IMR-90 (cell line): ENCODE measurements at regions of chr12 and their contacts with region 1.

Region 1: DNA sequence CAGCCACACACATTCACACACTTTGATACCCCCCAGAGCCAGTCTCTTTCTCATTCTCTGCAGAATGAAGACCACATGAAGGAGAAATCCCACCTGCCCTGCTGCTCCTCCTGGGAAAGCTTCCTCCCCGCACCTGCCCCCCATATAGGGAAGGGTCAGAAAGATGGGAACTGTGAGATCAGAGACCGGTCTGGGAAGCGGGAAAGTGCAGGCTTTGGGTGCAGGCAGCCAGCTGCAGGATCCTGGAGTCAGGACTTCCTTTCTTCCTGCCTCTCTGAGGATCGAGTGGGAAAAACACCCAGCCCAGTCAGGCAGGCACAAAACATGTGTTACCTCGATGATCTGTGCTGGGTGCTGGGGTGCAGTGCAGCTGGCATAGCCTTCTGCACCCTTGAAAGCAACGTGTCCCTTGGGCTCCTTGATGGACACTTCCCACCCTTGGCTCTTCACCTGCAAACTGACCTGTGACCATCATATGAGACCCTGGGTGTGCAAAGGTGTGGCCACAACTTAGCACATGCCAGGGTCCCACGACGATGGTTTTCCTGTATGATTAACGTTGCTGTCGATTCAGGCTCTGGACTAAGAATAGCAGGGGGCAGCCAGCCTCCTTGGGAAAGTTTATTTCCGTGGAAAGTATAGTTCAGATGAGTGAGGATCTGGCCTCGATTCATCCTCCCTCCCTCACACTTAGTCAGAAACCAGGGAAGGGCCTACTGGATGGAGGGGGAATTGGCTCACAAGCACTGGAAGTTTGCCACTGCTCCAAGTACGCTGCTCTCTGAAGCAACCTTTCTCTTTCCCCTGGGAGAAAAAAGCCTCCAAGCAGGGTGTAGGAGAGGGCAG is 105.4 kb upstream of the MED13L start:
- DNase-seq: peak; percentile 99
- ATAC-seq: peak; percentile 66
- H3K4me3 ChIP-seq: no peak overlapping the region
- H3K27ac ChIP-seq: peak overlapping the region; percentile 95
- H3K4me1 ChIP-seq: peaks cover 23% of the 10 kb centered on the region
- H3K27me3 ChIP-seq: no peaks in the 10 kb centered on the region
- CTCF ChIP-seq: peak; percentile 13; the same call in 1 of the 2 replicates
- POLR2A ChIP-seq: no peak
- RAD21 ChIP-seq: peak; percentile 42

Region 2: DNA sequence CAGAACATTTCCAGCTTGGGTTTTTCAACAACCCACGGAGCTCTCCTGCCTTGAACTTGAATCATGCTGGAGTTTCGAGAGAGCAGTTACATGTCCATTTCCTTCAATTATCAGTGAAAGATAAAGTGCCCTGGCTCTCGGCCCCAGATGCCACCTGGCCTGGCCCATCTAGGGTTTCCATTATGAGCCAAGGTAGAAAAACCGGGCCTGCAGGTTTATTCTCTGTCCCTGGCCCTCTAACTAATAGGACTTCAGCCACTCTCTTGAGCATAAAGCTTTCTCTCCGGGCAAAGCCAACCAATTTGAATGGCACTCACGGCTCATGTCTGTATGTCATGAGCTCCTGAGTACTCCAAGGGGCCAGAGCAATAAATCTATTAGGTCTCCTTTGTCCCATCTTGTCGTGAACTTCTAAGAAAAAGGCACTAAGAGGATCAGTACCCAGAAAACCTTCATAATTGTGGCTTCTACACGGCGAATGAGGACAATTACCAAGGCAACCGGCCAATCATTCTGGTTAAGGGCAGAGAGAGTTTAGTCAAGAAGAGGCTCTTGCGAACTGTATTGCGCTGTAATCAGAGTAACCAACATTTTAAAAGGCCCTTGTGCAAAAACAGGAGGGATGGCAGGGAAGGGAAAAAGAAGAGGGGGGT is 497.7 kb before region 1 on chr12:
- CTCF ChIA-PET with region 1: no interaction called
- POLR2A ChIA-PET with region 1: no interaction called
- dilution Hi-C with region 1: no loop called
- in situ Hi-C with region 1: no loop called
- intact Hi-C with region 1: no loop called
- DNase-seq: no peak
- ATAC-seq: no peak
- H3K4me3 ChIP-seq: no peak overlapping the region
- H3K27ac ChIP-seq: no peak overlapping the region
- H3K4me1 ChIP-seq: no peaks in the 10 kb centered on the region
- H3K27me3 ChIP-seq: peaks cover 3% of the 10 kb centered on the region
- CTCF ChIP-seq: no peak
- POLR2A ChIP-seq: no peak
- RAD21 ChIP-seq: no peak

Region 3: DNA sequence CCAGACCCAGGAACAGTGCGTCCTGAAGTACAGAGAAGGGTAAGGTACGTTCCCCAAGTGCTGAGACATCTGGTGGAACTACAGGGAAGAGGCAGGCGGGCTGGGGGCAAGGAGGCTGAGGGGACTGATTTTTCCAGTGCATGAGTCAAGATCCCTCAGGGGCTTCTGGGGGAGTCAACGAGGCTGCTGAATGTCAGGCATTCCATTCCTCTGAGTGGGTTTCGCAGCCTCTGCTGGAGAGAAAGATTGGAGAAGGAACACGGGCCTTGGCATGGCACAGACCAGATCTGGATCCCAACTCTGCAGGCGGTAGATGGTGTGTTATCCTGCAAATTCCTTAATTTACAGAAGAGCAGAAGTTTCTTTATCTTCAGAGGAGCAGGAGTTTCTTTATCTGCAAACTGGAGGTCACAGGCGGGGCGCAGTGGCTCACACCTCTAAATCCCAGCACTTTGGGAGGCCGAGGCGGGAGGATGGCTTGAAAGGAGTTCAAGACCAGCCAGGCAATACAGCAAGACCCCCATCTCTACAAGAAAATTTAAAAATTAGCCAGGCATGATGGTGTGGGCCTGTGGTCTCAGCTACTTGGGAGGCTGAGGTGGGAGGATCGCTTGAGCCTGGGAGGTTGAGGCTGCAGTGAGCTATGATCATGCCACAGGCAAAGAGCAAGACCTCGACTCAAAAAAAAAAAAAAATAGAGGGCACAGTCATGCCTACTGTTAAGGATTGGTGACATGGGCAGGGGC is 43.7 kb after region 1 on chr12:
- CTCF ChIA-PET with region 1: no interaction called
- POLR2A ChIA-PET with region 1: no interaction called
- dilution Hi-C with region 1: no loop called
- in situ Hi-C with region 1: no loop called
- intact Hi-C with region 1: loop called (anchors 5 kb)
- DNase-seq: peak; percentile 98
- ATAC-seq: peak; percentile 95
- H3K4me3 ChIP-seq: no peak overlapping the region
- H3K27ac ChIP-seq: peak overlapping the region; percentile 64
- H3K4me1 ChIP-seq: peaks cover 12% of the 10 kb centered on the region
- H3K27me3 ChIP-seq: no peaks in the 10 kb centered on the region
- CTCF ChIP-seq: peak; percentile 63
- POLR2A ChIP-seq: 0 out of 2 replicates have a peak, but pooled peaks have one; percentile 33
- RAD21 ChIP-seq: peak; percentile 76

Region 4: DNA sequence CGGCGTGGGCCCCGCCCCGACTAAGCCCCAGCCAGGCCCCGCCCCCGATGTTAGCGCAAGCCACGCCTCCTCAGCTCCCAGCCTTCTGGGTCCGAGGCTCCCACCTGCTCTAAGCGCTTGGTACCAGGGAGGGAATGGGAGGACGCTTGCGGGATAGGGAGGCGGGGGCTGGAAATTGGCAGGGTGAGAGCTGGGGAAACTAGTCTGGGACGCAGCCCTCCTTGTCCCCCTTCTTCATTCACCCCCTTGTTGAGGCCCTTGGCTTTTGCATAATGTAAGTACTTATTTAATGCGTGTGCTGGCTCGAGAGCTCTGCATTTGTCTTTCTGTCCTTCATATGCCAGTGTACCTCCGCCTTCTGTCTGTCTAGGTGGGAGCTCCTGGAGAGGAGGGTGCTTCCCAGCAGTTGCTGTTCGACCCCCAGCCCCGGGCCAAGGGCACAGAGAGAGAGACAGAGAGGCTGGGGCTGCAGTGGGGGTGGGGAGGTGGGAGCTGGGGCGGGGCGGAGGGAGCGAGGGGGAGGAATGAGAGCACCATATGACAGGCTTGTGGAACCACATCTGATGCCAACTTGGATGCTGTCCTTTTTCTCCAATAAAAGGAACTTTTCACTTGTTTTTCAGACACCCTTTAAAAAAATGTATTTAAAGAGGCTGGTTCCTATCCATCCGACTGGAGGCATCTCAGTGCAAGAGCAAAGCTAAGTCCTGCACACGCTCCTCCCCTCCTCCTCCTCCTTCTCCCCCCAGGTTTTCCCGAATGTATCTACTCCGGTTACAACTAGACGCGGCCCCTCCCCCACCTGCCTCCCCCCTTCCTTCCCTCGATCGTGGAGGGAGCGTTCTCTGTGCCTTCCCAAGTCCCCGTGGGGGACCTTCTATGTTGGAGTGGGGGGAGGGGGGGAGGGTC is 150.7 kb after region 1 on chr12:
- CTCF ChIA-PET with region 1: no interaction called
- POLR2A ChIA-PET with region 1: no interaction called
- dilution Hi-C with region 1: no loop called
- in situ Hi-C with region 1: no loop called
- intact Hi-C with region 1: loop called (anchors 5 kb)
- DNase-seq: peak; percentile 83
- ATAC-seq: peak; percentile 92
- H3K4me3 ChIP-seq: peak overlapping the region; percentile 62
- H3K27ac ChIP-seq: peak overlapping the region; percentile 55
- H3K4me1 ChIP-seq: peaks cover 9% of the 10 kb centered on the region
- H3K27me3 ChIP-seq: no peaks in the 10 kb centered on the region
- CTCF ChIP-seq: no peak
- POLR2A ChIP-seq: no peak
- RAD21 ChIP-seq: 0 out of 2 replicates have a peak, but pooled peaks have one; percentile 9

Region 5: DNA sequence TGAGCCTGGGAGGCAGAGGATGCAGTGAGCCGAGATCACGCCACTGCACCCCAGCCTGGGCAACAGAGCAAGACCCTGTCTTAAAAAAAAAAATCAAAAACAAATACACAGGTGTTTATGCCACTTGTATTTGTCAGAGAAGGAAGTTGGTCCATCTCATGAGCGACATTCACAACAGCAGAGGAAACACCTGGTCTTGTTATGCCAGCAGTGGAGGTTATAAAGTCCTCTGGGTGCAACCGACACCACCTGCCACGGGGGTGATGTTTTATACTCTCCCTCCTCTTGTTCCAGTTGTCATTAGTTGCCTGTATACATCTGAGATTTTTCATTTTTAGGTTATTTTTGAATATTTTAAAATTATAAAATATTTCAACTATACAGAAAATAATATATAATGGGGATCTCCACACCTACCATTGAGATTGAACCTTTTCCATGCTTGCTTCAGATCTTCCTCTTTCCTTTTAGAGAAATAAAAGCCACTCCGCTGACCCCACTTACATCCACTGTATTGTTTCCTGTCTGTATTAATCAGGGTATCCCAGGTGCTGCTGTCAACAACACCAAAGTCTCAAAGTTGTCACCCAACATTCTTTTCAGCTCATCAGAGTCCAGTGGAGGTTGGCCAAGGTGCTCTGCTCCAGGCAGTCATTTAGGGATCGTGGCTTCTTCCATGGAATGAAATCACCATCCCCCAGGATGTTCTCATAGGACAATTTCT is 420.3 kb after region 1 on chr12:
- CTCF ChIA-PET with region 1: no interaction called
- POLR2A ChIA-PET with region 1: no interaction called
- dilution Hi-C with region 1: no loop called
- in situ Hi-C with region 1: no loop called
- intact Hi-C with region 1: no loop called
- DNase-seq: no peak
- ATAC-seq: no peak
- H3K4me3 ChIP-seq: no peak overlapping the region
- H3K27ac ChIP-seq: no peak overlapping the region
- H3K4me1 ChIP-seq: no peaks in the 10 kb centered on the region
- H3K27me3 ChIP-seq: no peaks in the 10 kb centered on the region
- CTCF ChIP-seq: no peak
- POLR2A ChIP-seq: no peak
- RAD21 ChIP-seq: no peak